Activated B cell treated with CpG ODN at 0.5 μM for 24 hours (primary cell): ENCODE measurements at regions of chr11 and their contacts with region 1.

Region 1: DNA sequence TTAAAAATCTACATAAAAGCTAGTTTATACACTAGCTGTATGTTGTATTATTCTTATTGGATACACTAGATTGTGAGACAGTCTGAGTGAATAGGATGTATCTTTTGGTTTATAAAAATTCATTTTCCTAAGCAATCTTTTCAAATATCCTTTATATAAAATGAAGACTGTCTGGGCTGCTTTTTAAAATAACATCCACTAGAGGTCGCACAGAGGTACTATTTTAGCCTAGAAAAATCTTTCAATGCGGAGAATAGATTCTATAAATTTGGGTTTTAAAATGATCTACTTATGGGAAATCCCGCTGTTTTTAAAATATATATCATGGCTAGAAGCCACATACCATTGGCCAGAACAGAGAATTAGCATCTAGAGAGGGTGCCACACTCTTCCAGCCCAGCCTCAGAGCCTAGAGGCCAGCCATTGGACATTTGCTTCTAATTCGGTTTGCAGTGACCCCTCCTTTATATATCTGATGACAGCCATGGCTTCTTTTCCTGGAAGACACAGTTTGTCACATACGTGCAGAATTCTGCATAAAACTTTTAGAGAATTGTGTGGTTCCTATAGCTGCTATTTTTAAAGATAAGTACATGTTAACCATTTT is 7.3 kb downstream of the C11orf97 start:
- DNase-seq: no peak
- ATAC-seq: no peak
- H3K4me3 Mint-ChIP-seq: no peak overlapping the region
- H3K27ac Mint-ChIP-seq: no peak overlapping the region
- H3K4me1 Mint-ChIP-seq: no peaks in the 10 kb centered on the region
- H3K27me3 Mint-ChIP-seq: peaks cover 23% of the 10 kb centered on the region
- CTCF ChIP-seq: peak; percentile 54

Region 2: GRCh38 chr11:94504689-94505293 is 14.8 kb before region 1 on chr11:
- CTCF ChIA-PET with region 1: interaction called, 10 read pairs
- POLR2A ChIA-PET with region 1: no interaction called
- intact Hi-C with region 1: no loop called
- DNase-seq: no peak
- ATAC-seq: peak; percentile 47
- H3K4me3 Mint-ChIP-seq: no peak overlapping the region
- H3K27ac Mint-ChIP-seq: no peak overlapping the region
- H3K4me1 Mint-ChIP-seq: no peaks in the 10 kb centered on the region
- H3K27me3 Mint-ChIP-seq: no peaks in the 10 kb centered on the region
- CTCF ChIP-seq: peak; percentile 79

Region 3: GRCh38 chr11:94602430-94603372 is 83.1 kb after region 1 on chr11:
- CTCF ChIA-PET with region 1: no interaction called
- POLR2A ChIA-PET with region 1: no interaction called
- intact Hi-C with region 1: loop called (anchors 2 kb)
- DNase-seq: no peak
- ATAC-seq: peak; percentile 80
- H3K4me3 Mint-ChIP-seq: peak overlapping the region; percentile 8
- H3K27ac Mint-ChIP-seq: peak overlapping the region; percentile 68
- H3K4me1 Mint-ChIP-seq: peaks cover 9% of the 10 kb centered on the region
- H3K27me3 Mint-ChIP-seq: no peaks in the 10 kb centered on the region
- CTCF ChIP-seq: no peak

Region 4: GRCh38 chr11:94630221-94630620 is 110.6 kb after region 1 on chr11:
- CTCF ChIA-PET with region 1: no interaction called
- POLR2A ChIA-PET with region 1: no interaction called
- intact Hi-C with region 1: no loop called
- DNase-seq: no peak
- ATAC-seq: no peak
- H3K4me3 Mint-ChIP-seq: no peak overlapping the region
- H3K27ac Mint-ChIP-seq: no peak overlapping the region
- H3K4me1 Mint-ChIP-seq: no peaks in the 10 kb centered on the region
- H3K27me3 Mint-ChIP-seq: peaks cover 17% of the 10 kb centered on the region
- CTCF ChIP-seq: no peak

Region 5: DNA sequence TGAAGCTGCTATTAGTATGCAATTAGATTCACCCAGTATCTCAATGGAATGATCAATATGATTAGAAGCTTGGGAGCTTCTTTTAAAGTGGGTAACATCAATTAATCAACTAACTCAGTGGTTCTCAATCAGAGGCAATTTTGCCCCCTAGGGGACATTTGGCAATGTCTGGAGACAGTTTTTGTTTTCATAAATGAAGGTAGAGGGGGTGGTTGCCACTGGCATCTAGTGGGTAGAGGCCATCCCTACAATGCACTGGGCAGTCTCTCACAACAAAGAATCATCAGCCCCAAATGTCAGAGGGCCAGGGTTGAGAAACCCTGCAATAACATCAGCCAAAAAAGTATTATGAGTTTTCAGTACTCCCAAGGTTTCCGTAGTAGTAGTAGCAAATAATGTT is 242.6 kb after region 1 on chr11:
- CTCF ChIA-PET with region 1: no interaction called
- POLR2A ChIA-PET with region 1: no interaction called
- intact Hi-C with region 1: loop called (anchors 2 kb)
- DNase-seq: no peak
- ATAC-seq: no peak
- H3K4me3 Mint-ChIP-seq: no peak overlapping the region
- H3K27ac Mint-ChIP-seq: no peak overlapping the region
- H3K4me1 Mint-ChIP-seq: no peaks in the 10 kb centered on the region
- H3K27me3 Mint-ChIP-seq: peaks cover 8% of the 10 kb centered on the region
- CTCF ChIP-seq: no peak

Region 6: DNA sequence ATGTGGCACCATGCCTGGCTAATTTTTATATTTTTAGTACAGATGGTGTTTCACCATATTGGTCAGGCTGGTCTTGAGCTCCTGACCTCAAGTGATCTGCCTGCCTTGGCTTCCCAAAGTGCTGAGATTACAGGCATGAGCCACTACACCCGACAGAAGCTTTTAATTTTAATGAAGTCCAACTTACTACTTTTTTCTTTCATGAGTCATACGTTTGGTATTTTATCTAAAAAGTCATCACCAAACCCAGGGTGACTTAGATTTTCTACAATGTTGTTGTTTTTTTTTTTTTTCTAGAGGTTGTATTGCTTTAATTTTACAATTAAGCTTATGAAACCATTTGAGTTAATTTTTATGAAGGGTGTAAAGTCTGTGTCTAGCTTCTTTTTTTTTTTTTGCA is 1905.1 kb after region 1 on chr11:
- CTCF ChIA-PET with region 1: interaction called, 3 read pairs
- POLR2A ChIA-PET with region 1: no interaction called
- intact Hi-C with region 1: loop called (anchors 1 kb)
- DNase-seq: no peak
- ATAC-seq: no peak
- H3K4me3 Mint-ChIP-seq: no peak overlapping the region
- H3K27ac Mint-ChIP-seq: no peak overlapping the region
- H3K4me1 Mint-ChIP-seq: no peaks in the 10 kb centered on the region
- H3K27me3 Mint-ChIP-seq: peaks cover 32% of the 10 kb centered on the region
- CTCF ChIP-seq: no peak